Gastrocnemius medialis (tissue), 4 donors: ENCODE measurements at regions of chr15 and their contacts with region 1.

Region 1: GRCh38 chr15:97909291-97909891 is 51.1 kb upstream of the ARRDC4 start:
- DNase-seq: peak; percentile 25 to 39
- ATAC-seq: peak; percentile 80 to 90
- H3K4me3 ChIP-seq: no peak overlapping the region
- H3K27ac ChIP-seq: no peak overlapping the region
- H3K4me1 ChIP-seq: peaks cover 0 to under 1% of the 10 kb centered on the region in 2 donors
- H3K27me3 ChIP-seq: peaks cover 9 to 22% (median 19%) of the 10 kb centered on the region in 3 donors
- CTCF ChIP-seq: peak; percentile 66 to 89 (median 83)
- POLR2A ChIP-seq: no peak

Region 2: GRCh38 chr15:97960364-97961066 is 51.1 kb after region 1 on chr15 and contains the start of gene ARRDC4:
- in situ Hi-C with region 1: no loop called
- intact Hi-C with region 1: loop called (anchors 5 kb)
- DNase-seq: peak; percentile 100
- ATAC-seq: peak; percentile 93 to 96
- H3K4me3 ChIP-seq: peak within 1 kb of the TSS; percentile 75 to 98 (median 94)
- H3K27ac ChIP-seq: peak within 1 kb of the TSS; percentile 80 to 97 (median 96)
- H3K4me1 ChIP-seq: peaks cover 23 to 29% of the 10 kb centered on the region in 2 donors
- H3K27me3 ChIP-seq: no peaks in the 10 kb centered on the region
- CTCF ChIP-seq: no peak
- POLR2A ChIP-seq: peak; percentile 85 to 94
- total RNA-seq, gene ARRDC4: 11.7 to 20.6 (median 17.7) TPM

Region 3: GRCh38 chr15:98177924-98178592 is 268.7 kb after region 1 on chr15:
- in situ Hi-C with region 1: loop called in 3 of 4 experiments (anchors 5 to 10 kb)
- intact Hi-C with region 1: loop called (anchors 1 kb)
- DNase-seq: peak in 1 of 2 donors; percentile 3
- ATAC-seq: peak; percentile 60 to 69
- H3K4me3 ChIP-seq: no peak overlapping the region
- H3K27ac ChIP-seq: no peak overlapping the region
- H3K4me1 ChIP-seq: no peaks in the 10 kb centered on the region
- H3K27me3 ChIP-seq: peaks cover 5 to 19% (median 7%) of the 10 kb centered on the region in 3 donors
- CTCF ChIP-seq: peak; percentile 17 to 52 (median 37)
- POLR2A ChIP-seq: no peak

Region 4: DNA sequence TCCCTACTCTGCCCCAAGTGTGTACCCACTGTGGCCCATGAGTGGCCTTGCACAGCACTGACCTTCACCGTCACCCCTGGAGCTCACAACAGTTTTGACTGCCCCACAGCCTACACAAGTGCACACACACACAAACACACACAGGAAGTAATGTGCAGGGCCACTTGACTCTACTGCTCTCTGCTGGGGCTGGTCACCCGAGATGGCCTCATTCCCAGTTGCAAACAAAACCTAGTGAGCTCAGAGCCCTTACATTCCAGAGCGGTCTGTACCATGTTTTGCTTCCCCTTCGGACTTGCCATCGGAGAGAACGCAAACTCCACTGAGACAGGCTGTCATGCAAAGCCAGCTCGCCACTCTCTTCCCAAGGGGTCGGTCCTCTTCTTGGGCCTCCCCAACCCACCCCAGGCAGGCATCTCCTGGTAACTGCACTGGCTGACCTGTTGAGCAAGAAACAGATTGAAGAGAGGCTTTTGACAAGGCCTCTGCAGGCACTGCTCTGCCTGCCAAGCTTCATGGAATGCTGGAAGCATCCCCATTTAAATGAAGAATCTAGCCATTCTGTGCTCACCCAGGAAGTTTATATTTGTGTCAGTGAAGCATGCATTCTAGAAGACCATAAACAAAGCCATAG is 506.9 kb after region 1 on chr15:
- in situ Hi-C with region 1: loop called in 2 of 4 experiments (anchors 10 to 25 kb)
- intact Hi-C with region 1: no loop called
- DNase-seq: no peak
- ATAC-seq: no peak
- H3K4me3 ChIP-seq: no peak overlapping the region
- H3K27ac ChIP-seq: no peak overlapping the region
- H3K4me1 ChIP-seq: peaks cover 1 to 2% of the 10 kb centered on the region in 2 donors
- H3K27me3 ChIP-seq: peaks cover 6 to 8% (median 6%) of the 10 kb centered on the region in 3 donors
- CTCF ChIP-seq: no peak
- POLR2A ChIP-seq: no peak

Region 5: GRCh38 chr15:98428253-98428989 is 519.0 kb after region 1 on chr15:
- in situ Hi-C with region 1: loop called in 2 of 4 experiments (anchors 25 kb)
- intact Hi-C with region 1: loop called (anchors 5 kb)
- DNase-seq: peak; percentile 21 to 26
- ATAC-seq: peak; percentile 70 to 81
- H3K4me3 ChIP-seq: peak overlapping the region; percentile 29 to 62 (median 40)
- H3K27ac ChIP-seq: no peak overlapping the region
- H3K4me1 ChIP-seq: no peaks in the 10 kb centered on the region
- H3K27me3 ChIP-seq: peaks cover 12 to 27% (median 16%) of the 10 kb centered on the region in 3 donors
- CTCF ChIP-seq: peak in 4 of 5 experiments; percentile 72 to 89 (median 77)
- POLR2A ChIP-seq: no peak